ENCODE measurements at regions of chr2 and their contacts with region 1.

Region 1: DNA sequence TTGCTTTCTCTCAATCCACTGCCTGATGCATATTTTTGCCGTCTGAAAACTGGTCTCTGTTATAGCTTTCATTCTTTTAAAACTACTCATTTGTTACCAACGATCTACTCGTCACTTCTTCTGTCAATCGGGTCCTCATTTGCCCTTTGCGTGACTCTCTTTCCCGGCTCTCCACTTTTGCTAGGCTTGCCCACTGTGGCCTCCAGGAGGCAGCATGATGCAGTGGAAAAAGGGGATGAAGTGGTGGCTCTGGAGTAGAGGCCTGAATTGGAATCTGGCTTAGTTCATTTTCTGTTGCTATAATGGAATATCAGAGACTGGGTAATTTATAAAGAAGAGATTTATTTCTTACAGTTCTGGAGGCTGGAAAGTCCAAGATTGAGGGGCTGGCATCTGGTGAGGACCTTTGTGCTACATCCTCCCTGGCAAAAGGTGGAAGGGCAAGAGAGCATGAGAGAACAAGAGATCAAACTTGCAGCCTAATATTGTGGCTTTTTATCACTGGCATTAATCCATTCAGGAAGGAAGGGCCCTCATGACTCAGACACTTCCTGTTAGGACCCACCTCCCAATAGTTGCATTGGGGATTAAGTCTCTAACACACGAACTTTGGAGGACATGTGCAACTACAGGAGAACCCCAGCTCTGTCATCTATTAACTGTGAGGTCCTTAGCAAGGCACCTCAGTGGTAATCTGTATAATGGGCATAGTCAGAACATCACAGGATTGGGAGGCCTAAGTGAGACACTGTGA is 15.4 kb downstream of the GDF7 start:
- DNase-seq: peak; percentile 47
- ATAC-seq: peak; percentile 43
- H3K4me3 ChIP-seq: no peak overlapping the region
- H3K27ac ChIP-seq: no peak overlapping the region
- H3K4me1 ChIP-seq: peaks cover 31% of the 10 kb centered on the region
- H3K27me3 ChIP-seq: no peaks in the 10 kb centered on the region
- CTCF ChIP-seq: peak; percentile 82
- EP300 ChIP-seq: no peak
- POLR2A ChIP-seq: no peak
- RAD21 ChIP-seq: peak; percentile 82

Region 2: DNA sequence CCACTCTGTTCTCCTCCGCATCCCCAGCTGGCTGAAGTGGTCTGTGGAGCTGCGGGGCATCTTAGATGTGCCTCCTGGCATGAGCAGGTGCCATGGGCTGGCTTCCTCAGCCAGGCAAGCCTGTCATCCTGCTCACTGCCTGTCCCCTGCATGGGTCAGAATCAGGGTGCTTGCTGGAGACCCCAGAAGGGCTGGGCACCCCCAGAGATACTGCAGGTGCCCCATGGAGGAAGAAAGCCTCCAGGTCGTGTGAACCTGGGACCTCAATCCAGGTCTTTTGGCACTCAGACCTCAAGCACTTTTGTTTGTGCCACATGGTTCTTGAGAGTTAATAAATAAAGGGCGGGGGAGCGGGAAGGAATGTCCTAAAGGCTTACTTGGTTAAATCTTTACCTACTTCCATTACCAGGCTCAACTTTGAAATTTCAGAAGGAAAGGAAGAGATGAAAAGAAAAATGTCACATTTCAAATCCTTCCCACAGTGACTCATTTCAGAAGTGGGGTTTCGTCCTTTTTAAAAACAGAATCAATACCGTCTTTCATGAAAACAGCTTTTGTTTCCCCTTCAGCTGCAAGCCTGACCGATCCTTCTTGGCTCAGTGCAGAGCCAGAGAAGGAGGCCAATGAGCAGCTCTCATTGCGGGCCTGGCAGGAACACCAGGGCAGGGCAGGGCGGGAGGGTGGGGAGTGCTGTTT is 165.6 kb before region 1 on chr2:
- CTCF ChIA-PET with region 1: no interaction called
- POLR2A ChIA-PET with region 1: no interaction called
- in situ Hi-C with region 1: no loop called
- intact Hi-C with region 1: no loop called
- DNase-seq: peak; percentile 58
- ATAC-seq: peak; percentile 60
- H3K4me3 ChIP-seq: no peak overlapping the region
- H3K27ac ChIP-seq: no peak overlapping the region
- H3K4me1 ChIP-seq: peaks cover 42% of the 10 kb centered on the region
- H3K27me3 ChIP-seq: no peaks in the 10 kb centered on the region; a peak in 1 of 5 replicates
- CTCF ChIP-seq: no peak
- EP300 ChIP-seq: peak in 1 of 2 experiments; percentile 41; a peak in 2 of 4 replicates
- POLR2A ChIP-seq: no peak
- RAD21 ChIP-seq: no peak

Region 3: GRCh38 chr2:20728114-20728758 is 45.9 kb after region 1 on chr2:
- CTCF ChIA-PET with region 1: no interaction called
- POLR2A ChIA-PET with region 1: no interaction called
- in situ Hi-C with region 1: no loop called
- intact Hi-C with region 1: loop called (anchors 2 kb)
- DNase-seq: peak; percentile 91
- ATAC-seq: peak; percentile 95
- H3K4me3 ChIP-seq: peak overlapping the region in 1 of 3 experiments; percentile 4; a peak in 1 of 6 replicates
- H3K27ac ChIP-seq: peak overlapping the region; percentile 57
- H3K4me1 ChIP-seq: peaks cover 30% of the 10 kb centered on the region
- H3K27me3 ChIP-seq: no peaks in the 10 kb centered on the region
- CTCF ChIP-seq: 0 out of 2 replicates have a peak, but pooled peaks have one; percentile 13
- EP300 ChIP-seq: peak; percentile 69 to 92; a peak in 2 of 4 replicates
- POLR2A ChIP-seq: no peak
- RAD21 ChIP-seq: no peak

Region 4: GRCh38 chr2:20766798-20767644 is 84.7 kb after region 1 on chr2:
- CTCF ChIA-PET with region 1: no interaction called
- POLR2A ChIA-PET with region 1: no interaction called
- in situ Hi-C with region 1: loop called (anchors 5 kb)
- intact Hi-C with region 1: no loop called
- DNase-seq: no peak
- ATAC-seq: peak; percentile 54
- H3K4me3 ChIP-seq: no peak overlapping the region
- H3K27ac ChIP-seq: no peak overlapping the region
- H3K4me1 ChIP-seq: no peaks in the 10 kb centered on the region
- H3K27me3 ChIP-seq: no peaks in the 10 kb centered on the region
- CTCF ChIP-seq: no peak
- EP300 ChIP-seq: no peak
- POLR2A ChIP-seq: no peak
- RAD21 ChIP-seq: no peak